PC-9 (cell line): ENCODE measurements at regions of chr1 and their contacts with region 1.

Region 1: DNA sequence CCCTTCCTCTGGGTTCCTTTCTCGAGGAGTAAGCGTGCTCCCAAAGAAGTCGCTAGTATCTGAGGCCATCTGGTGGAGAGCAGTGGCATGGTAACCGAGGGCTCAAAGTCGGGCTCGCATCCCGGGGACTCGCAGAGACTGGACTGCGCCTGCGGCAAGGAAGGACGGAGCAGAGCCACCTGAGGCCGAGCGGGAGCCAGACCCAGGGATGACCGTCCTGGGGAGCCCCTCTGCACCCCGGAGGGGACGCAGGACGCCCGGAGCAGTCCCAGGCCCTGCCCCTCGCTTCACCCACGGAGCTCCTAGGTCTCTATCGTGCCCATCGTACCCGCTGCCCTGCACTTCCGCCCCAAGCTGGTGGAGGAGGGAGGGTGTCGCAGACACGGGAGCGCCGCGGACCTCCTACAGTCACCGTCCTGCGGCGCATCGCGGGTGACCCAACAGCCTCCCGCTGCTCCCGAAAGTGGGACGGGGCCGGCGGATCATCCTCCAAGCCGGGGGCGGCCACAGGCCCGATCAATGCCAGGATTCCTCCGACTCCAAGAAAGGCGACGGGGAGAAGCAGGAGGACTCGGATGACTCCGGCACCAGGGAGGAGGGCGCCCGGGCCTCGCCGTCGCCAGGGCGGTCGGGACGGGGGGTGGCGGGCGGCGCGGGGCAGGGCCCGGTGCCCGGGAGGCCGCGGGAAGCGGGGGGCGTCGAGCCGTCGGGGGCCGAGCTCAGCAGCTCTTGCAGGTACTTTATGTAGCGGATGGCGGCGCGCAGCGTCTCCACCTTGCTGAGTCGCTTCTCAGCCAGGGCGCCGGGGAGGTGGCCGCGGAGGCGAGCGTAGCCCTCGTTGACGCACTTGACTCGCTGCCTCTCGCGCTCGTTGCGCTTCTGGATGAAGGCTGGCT is 2.3 kb upstream of the CACNA1S start:
- DNase-seq: peak; percentile 90 to 94
- H3K4me3 ChIP-seq: peak overlapping the region; percentile 60
- H3K27ac ChIP-seq: no peak overlapping the region
- H3K4me1 ChIP-seq: no peaks in the 10 kb centered on the region; the same call in 1 of the 2 replicates
- H3K27me3 ChIP-seq: no peaks in the 10 kb centered on the region; the same call in 1 of the 2 replicates
- CTCF ChIP-seq: peak; percentile 88

Region 2: GRCh38 chr1:200669314-200670241 is 444.9 kb before region 1 on chr1 and contains the start of gene DDX59:
- CTCF ChIA-PET with region 1: interaction called, 11 read pairs
- POLR2A ChIA-PET with region 1: no interaction called
- intact Hi-C with region 1: no loop called
- DNase-seq: peak; percentile 83 to 95
- H3K4me3 ChIP-seq: peak within 1 kb of the TSS; percentile 75
- H3K27ac ChIP-seq: peak within 1 kb of the TSS; percentile 96
- H3K4me1 ChIP-seq: peaks cover 23% of the 10 kb centered on the region
- H3K27me3 ChIP-seq: no peaks in the 10 kb centered on the region
- CTCF ChIP-seq: no peak
- total RNA-seq, gene DDX59: 32.9 and 35.9 TPM in 2 replicates

Region 3: DNA sequence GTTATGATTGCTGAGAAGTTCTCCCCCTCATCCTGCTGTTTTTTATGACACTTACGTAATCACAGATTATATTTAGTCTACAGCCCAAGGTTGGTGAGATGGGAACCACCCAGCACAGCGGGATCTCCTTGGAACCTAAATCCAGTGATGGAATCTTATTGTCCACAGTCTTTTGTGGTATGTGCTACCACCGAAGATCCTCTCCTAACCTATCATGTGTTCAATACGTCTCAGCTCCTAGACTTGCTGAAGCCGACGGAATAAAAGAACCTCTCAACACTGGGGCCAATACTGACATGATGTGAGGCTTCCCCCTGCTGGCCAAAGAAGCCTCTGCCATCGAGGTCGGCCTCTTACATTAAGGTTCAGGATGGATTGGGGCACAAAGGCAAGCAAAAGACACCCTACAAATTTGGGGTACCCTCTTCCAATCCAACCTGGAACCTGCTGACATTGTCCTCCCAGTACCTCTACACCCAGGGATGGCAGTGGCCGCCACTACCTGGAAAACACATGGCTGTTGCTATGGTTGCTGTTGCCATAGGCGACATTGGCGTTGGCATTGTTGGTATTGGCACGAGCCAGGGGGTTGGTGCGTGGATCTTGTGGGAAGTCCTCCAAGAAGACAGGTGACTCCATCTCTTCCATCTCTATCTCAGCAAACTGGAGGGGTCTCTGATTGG is 71.6 kb before region 1 on chr1:
- CTCF ChIA-PET with region 1: interaction called, 4 read pairs
- POLR2A ChIA-PET with region 1: no interaction called
- intact Hi-C with region 1: loop called (anchors 5 kb)
- DNase-seq: peak; percentile 51 to 52
- H3K4me3 ChIP-seq: no peak overlapping the region
- H3K27ac ChIP-seq: no peak overlapping the region
- H3K4me1 ChIP-seq: no peaks in the 10 kb centered on the region
- H3K27me3 ChIP-seq: peaks cover 18% of the 10 kb centered on the region
- CTCF ChIP-seq: peak; percentile 91

Region 4: GRCh38 chr1:201072158-201072557 is 42.3 kb before region 1 on chr1:
- CTCF ChIA-PET with region 1: no interaction called
- POLR2A ChIA-PET with region 1: no interaction called
- intact Hi-C with region 1: no loop called
- DNase-seq: no peak
- H3K4me3 ChIP-seq: no peak overlapping the region
- H3K27ac ChIP-seq: no peak overlapping the region
- H3K4me1 ChIP-seq: no peaks in the 10 kb centered on the region
- H3K27me3 ChIP-seq: peaks cover 66% of the 10 kb centered on the region
- CTCF ChIP-seq: no peak

Region 5: DNA sequence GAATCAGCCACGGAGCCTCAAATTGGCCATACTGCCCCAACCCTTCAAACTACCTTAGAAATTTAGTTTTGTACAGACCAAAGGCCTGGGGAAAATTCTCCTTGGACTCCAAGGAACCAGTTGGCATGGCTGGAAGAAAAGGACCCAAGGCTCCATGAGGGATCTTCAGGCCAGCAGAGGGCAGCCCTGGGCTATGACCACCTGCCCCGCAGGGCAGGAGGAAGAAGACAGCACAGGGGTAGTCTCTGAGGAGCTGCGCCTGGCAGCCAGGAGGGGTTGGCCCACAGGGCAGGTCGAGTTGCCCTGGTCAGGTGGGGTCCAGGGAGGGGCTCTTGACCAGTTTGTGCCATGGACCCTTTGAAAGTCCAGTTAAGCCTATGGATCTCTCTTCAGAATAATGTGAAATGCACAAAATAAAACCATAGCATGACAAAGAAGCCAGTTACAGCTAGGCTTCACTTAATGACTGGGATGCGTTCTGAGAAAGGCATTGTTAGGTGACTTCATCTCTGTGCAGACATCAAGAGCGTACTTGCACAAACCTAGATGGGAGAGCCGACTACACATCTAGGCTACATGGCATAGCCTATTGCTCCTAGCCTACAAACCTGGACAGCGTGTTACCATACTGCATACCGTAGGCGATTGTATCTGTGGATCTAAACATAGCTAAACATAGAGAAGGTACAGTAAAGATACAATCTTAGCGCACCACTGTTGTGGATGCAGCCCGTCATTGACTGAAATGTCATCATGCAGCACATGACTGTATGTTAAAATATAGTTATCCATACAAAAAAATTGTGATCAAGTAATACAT is 28.4 kb before region 1 on chr1:
- CTCF ChIA-PET with region 1: interaction called, 16 read pairs
- POLR2A ChIA-PET with region 1: no interaction called
- intact Hi-C with region 1: loop called (anchors 1 kb)
- DNase-seq: peak; percentile 41 to 62
- H3K4me3 ChIP-seq: no peak overlapping the region
- H3K27ac ChIP-seq: no peak overlapping the region
- H3K4me1 ChIP-seq: no peaks in the 10 kb centered on the region
- H3K27me3 ChIP-seq: peaks cover 33% of the 10 kb centered on the region; the same call in 1 of the 2 replicates
- CTCF ChIP-seq: peak; percentile 75

Region 6: DNA sequence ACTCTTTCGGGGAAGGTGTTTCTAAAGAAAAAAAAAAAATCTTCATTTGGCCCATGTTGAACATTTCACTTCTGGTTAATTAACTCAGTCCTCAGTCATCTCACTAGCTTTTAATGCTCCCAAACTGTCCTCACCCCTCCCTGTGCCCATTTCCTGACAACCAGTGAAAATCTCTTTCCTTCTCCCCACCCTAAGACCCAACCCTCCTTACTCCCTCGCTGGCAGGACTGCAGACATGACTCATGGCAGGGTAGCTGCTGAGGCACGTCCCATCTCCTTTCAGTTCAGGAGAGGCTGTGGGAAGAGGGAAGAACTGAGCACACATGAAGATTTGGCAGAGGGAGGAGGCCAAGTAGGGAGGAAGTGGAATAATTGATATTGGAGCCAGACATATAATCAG is 181.4 kb after region 1 on chr1:
- CTCF ChIA-PET with region 1: no interaction called
- POLR2A ChIA-PET with region 1: no interaction called
- intact Hi-C with region 1: no loop called
- DNase-seq: peak; percentile 63 to 70
- H3K4me3 ChIP-seq: no peak overlapping the region
- H3K27ac ChIP-seq: no peak overlapping the region
- H3K4me1 ChIP-seq: peaks cover 34% of the 10 kb centered on the region
- H3K27me3 ChIP-seq: no peaks in the 10 kb centered on the region
- CTCF ChIP-seq: no peak

Region 7: DNA sequence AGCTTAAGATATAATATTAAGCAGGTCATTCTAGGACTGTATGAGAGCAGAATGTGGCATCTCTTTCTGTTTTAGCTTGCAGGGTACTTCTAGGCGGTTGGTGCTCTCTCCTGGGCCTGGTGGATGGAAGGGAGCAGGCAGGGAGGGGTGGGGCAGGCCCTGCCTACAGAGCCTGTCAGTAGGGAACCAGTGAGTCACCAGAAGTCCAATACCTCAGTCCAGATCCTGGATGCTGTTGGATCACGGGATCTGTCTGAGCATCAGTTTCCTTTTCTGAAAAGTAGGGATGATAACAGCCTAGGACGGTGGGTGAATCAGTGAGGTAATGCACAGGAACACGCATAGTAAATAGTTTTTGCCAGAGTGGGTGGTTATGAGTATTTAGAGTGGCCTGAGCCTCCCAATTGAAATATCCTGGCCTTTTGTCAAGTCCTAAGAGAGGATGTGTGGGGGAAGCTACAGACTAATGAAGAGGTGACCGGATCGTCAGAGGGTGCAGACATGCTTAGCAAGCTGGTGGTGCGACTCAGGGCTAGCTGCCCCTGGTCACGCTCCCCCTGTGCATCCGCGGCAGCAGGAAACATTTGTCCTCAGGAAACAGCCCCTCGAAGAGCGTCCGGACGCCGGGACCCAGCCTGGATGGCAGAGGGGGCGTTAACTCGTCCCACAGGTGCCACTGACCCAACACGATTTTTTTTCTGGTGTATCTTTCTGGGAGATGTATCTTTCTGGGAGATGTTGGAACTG is 448.3 kb after region 1 on chr1:
- CTCF ChIA-PET with region 1: no interaction called
- POLR2A ChIA-PET with region 1: no interaction called
- intact Hi-C with region 1: no loop called
- DNase-seq: no peak
- H3K4me3 ChIP-seq: no peak overlapping the region
- H3K27ac ChIP-seq: no peak overlapping the region
- H3K4me1 ChIP-seq: no peaks in the 10 kb centered on the region
- H3K27me3 ChIP-seq: no peaks in the 10 kb centered on the region
- CTCF ChIP-seq: no peak